ENCODE measurements at regions of chr7 and their contacts with region 1.

Region 1: GRCh38 chr7:95608359-95609173 is 12.2 kb upstream of the PDK4 start:
- DNase-seq: peak; percentile 94
- ATAC-seq: peak; percentile 91
- H3K4me3 ChIP-seq: peak overlapping the region; percentile 19; the same call in 1 of the 2 replicates
- H3K27ac ChIP-seq: peak overlapping the region; percentile 63
- H3K4me1 ChIP-seq: peaks cover 31% of the 10 kb centered on the region
- H3K27me3 ChIP-seq: no peaks in the 10 kb centered on the region
- CTCF ChIP-seq: no peak

Region 2: DNA sequence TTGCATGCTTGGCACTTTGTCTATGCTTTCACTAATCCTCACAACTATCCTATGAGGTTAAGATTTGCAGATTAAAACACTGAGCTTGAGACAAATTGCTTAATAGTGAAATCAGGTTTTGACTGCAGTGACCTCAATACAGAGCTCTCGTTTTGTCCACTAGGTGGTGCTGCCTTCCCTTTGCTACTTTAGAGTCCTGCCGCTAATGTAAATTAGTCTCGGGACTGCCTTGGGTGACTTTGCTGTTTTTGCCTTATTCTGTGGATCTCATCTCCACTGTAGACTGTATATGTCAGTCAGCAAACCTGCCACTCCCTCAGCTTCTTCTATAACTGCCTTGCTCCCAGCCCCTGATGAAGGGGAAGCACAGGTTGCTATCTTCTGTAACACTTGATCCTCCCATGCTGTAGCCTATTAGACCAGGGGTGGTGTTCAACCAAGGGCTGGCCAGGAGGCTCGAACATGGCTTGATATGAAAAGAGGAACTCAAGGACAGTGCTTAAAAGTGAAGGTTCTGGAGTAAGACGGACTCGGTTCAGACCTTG is 96.8 kb before region 1 on chr7:
- CTCF ChIA-PET with region 1: no interaction called
- POLR2A ChIA-PET with region 1: no interaction called
- intact Hi-C with region 1: no loop called
- DNase-seq: peak; percentile 74
- ATAC-seq: peak; percentile 96
- H3K4me3 ChIP-seq: peak overlapping the region; percentile 14; the same call in 1 of the 2 replicates
- H3K27ac ChIP-seq: no peak overlapping the region
- H3K4me1 ChIP-seq: no peaks in the 10 kb centered on the region
- H3K27me3 ChIP-seq: 0 out of 2 replicates have a peak, but pooled peaks cover 3% of the 10 kb centered on the region
- CTCF ChIP-seq: peak; percentile 86

Region 3: DNA sequence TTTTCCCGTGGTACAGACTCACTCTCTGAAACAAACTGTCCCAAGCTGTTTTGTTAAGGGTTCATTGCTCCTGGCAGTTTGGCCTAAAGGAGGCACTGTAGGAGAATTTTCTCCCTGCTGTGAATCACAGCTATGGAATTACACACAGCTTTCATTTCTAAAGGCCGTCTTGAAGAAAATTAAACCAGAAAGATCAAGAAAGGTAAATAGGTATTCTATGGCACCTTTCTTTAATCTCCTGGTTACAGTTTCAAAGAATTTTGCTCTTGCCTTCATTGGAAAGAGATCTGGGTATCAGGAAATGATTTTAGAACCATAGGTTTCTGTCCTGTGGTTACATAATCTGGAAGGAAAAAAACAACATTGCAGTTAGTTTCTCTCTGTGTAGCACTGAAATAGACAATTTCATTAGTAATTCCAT is 63.5 kb before region 1 on chr7:
- CTCF ChIA-PET with region 1: interaction called, 18 read pairs
- POLR2A ChIA-PET with region 1: no interaction called
- intact Hi-C with region 1: loop called (anchors 1 kb)
- DNase-seq: peak; percentile 71
- ATAC-seq: peak; percentile 80
- H3K4me3 ChIP-seq: peak overlapping the region; percentile 64
- H3K27ac ChIP-seq: no peak overlapping the region
- H3K4me1 ChIP-seq: peaks cover 27% of the 10 kb centered on the region
- H3K27me3 ChIP-seq: peaks cover 17% of the 10 kb centered on the region
- CTCF ChIP-seq: peak; percentile 90

Region 4: GRCh38 chr7:95596198-95597063 is 12.1 kb before region 1 on chr7 and contains the start of gene PDK4:
- CTCF ChIA-PET with region 1: no interaction called
- POLR2A ChIA-PET with region 1: no interaction called
- intact Hi-C with region 1: loop called (anchors 1 kb)
- DNase-seq: peak; percentile 73
- ATAC-seq: peak; percentile 94
- H3K4me3 ChIP-seq: peak within 1 kb of the TSS; percentile 80
- H3K27ac ChIP-seq: no peak within 1 kb of the TSS
- H3K4me1 ChIP-seq: peaks cover 8% of the 10 kb centered on the region; the same call in 1 of the 2 replicates
- H3K27me3 ChIP-seq: no peaks in the 10 kb centered on the region
- CTCF ChIP-seq: no peak
- total RNA-seq, gene PDK4: 0.63 and 3.2 TPM in 2 replicates

Region 5: DNA sequence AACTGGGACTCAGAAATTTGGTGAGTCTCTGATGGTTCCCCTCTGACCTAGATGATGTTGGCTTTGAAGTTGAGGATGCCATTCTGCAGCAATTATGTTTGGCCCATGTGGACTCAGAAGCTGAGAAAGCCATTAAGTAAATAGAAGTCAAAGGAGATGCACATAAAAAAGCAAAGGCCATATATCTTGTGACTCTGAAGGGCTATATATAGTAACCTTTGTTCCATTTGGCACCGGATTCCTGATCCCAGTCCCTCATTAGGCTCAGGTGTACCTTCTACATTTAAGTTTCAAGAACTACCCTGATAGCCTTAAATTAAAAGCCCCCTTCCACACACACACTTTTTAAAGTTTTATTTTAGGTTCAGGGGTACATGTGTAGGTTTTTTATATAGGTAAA is 37.8 kb after region 1 on chr7:
- CTCF ChIA-PET with region 1: no interaction called
- POLR2A ChIA-PET with region 1: no interaction called
- intact Hi-C with region 1: loop called (anchors 5 kb)
- DNase-seq: no peak
- ATAC-seq: no peak
- H3K4me3 ChIP-seq: no peak overlapping the region
- H3K27ac ChIP-seq: no peak overlapping the region
- H3K4me1 ChIP-seq: peaks cover 18% of the 10 kb centered on the region
- H3K27me3 ChIP-seq: peaks cover 3% of the 10 kb centered on the region
- CTCF ChIP-seq: no peak

Region 6: GRCh38 chr7:95675016-95675415 is 66.5 kb after region 1 on chr7:
- CTCF ChIA-PET with region 1: no interaction called
- POLR2A ChIA-PET with region 1: no interaction called
- intact Hi-C with region 1: loop called (anchors 2 kb)
- DNase-seq: peak; percentile 53
- ATAC-seq: peak; percentile 77
- H3K4me3 ChIP-seq: no peak overlapping the region
- H3K27ac ChIP-seq: no peak overlapping the region
- H3K4me1 ChIP-seq: no peaks in the 10 kb centered on the region; the same call in 1 of the 2 replicates
- H3K27me3 ChIP-seq: no peaks in the 10 kb centered on the region
- CTCF ChIP-seq: no peak

Region 7: DNA sequence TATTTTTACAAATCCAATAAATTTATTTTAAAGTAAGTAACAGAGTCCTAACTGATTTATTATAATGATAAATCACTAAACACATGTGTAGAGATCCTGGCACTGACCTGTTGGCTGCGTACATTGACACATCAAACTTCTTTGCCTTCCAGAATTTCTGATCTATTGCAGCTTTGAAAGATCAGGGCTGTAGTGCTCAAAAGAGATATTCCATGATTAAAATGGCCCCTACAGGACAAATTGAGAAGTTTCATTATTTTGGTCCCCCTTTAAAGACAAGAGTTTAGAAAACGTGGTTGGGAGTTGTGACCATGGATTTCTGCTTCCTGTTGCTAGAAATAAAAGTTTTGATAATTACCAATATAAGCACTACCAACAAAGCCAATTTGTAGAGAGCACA is 75.5 kb after region 1 on chr7:
- CTCF ChIA-PET with region 1: interaction called, 11 read pairs
- POLR2A ChIA-PET with region 1: interaction called, 4 read pairs
- intact Hi-C with region 1: loop called (anchors 2 kb)
- DNase-seq: peak; percentile 61
- ATAC-seq: peak; percentile 66
- H3K4me3 ChIP-seq: no peak overlapping the region
- H3K27ac ChIP-seq: no peak overlapping the region
- H3K4me1 ChIP-seq: 0 out of 2 replicates have a peak, but pooled peaks cover 5% of the 10 kb centered on the region
- H3K27me3 ChIP-seq: no peaks in the 10 kb centered on the region
- CTCF ChIP-seq: peak; percentile 63

Region 8: DNA sequence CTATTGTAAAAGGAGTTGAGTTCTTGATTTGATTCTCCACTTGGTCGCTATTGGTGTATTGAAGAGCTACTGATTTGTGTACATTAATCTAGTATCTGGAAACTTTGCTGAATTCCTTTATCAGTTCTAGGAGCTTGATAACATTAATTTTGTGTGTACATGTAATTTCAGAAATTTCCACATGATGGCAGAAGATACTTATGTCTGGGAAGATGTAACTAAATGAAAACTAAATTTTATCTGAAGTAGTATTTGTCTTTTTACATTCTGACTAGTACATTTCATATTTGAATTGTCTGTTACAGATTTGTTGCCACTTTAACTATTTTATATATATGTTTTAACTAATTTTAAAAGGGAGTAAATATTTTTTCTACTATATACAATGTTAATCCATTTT is 1536.5 kb after region 1 on chr7:
- CTCF ChIA-PET with region 1: no interaction called
- POLR2A ChIA-PET with region 1: interaction called, 12 read pairs
- intact Hi-C with region 1: no loop called
- DNase-seq: peak; percentile 61
- ATAC-seq: no peak
- H3K4me3 ChIP-seq: no peak overlapping the region
- H3K27ac ChIP-seq: no peak overlapping the region
- H3K4me1 ChIP-seq: no peaks in the 10 kb centered on the region
- H3K27me3 ChIP-seq: no peaks in the 10 kb centered on the region
- CTCF ChIP-seq: peak; percentile 58